Activated naive CD8-positive, alpha-beta T cell treated with anti-CD3 and anti-CD28 coated beads, Interleukin-2, amount 10 ng/mL, durations not matched to agents 7 days and 5 days (primary cell): ENCODE measurements at regions of chr10 and their contacts with region 1.

Region 1: GRCh38 chr10:87861953-87862678 is 1.2 kb downstream of the KLLN start:
- DNase-seq: peak; percentile 95
- ATAC-seq: peak; percentile 65
- H3K4me3 Mint-ChIP-seq: peak overlapping the region; percentile 92
- H3K27ac Mint-ChIP-seq: peak overlapping the region; percentile 95
- H3K4me1 Mint-ChIP-seq: peaks cover 21% of the 10 kb centered on the region
- H3K27me3 Mint-ChIP-seq: no peaks in the 10 kb centered on the region

Region 2: GRCh38 chr10:87875929-87876571 is 13.9 kb after region 1 on chr10:
- POLR2A ChIA-PET with region 1: interaction called, 13 read pairs
- DNase-seq: no peak
- ATAC-seq: no peak
- H3K4me3 Mint-ChIP-seq: no peak overlapping the region
- H3K27ac Mint-ChIP-seq: no peak overlapping the region
- H3K4me1 Mint-ChIP-seq: peaks cover 13% of the 10 kb centered on the region
- H3K27me3 Mint-ChIP-seq: no peaks in the 10 kb centered on the region

Region 3: DNA sequence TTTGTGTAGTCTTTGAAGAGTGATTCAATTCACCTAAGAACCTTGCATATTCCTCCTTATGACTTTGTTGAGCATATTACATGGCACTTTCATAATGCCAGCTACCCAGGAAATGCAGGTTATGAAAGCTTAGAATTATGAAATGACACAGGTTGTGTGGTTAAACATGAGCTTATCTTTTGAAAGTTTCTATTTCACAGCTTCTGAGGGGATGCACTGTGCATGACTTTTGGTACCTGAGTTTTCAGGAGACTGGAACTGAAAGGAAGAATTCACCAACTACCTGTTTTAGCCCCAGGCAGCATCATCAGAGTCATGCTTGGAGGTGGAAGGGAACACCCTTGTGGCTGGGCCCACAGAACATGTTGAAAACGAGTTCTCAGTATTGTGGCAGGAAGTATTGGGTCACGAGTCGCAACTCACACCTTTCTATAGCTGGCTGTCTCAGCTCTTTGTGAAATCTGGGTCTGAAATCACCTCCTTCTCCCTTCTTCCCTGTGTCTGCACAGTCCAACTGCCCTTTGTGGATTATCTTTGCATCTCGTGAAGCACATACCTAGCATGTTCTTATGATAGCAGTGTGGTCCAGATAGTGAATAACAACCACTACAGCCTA is 229.5 kb after region 1 on chr10:
- POLR2A ChIA-PET with region 1: interaction called, 18 read pairs
- DNase-seq: peak; percentile 53
- ATAC-seq: peak; percentile 99
- H3K4me3 Mint-ChIP-seq: peak overlapping the region; percentile 43
- H3K27ac Mint-ChIP-seq: peak overlapping the region; percentile 78
- H3K4me1 Mint-ChIP-seq: peaks cover 30% of the 10 kb centered on the region
- H3K27me3 Mint-ChIP-seq: peaks cover 25% of the 10 kb centered on the region

Region 4: GRCh38 chr10:88270871-88271713 is 409.0 kb after region 1 on chr10:
- POLR2A ChIA-PET with region 1: interaction called, 20 read pairs
- DNase-seq: peak; percentile 43
- ATAC-seq: peak; percentile 82
- H3K4me3 Mint-ChIP-seq: peak overlapping the region; percentile 31
- H3K27ac Mint-ChIP-seq: peak overlapping the region; percentile 69
- H3K4me1 Mint-ChIP-seq: peaks cover 31% of the 10 kb centered on the region
- H3K27me3 Mint-ChIP-seq: peaks cover 21% of the 10 kb centered on the region

Region 5: GRCh38 chr10:88392222-88392621 is 530.1 kb after region 1 on chr10:
- POLR2A ChIA-PET with region 1: interaction called, 97 read pairs
- DNase-seq: no peak
- ATAC-seq: peak; percentile 94
- H3K4me3 Mint-ChIP-seq: peak overlapping the region; percentile 59
- H3K27ac Mint-ChIP-seq: peak overlapping the region; percentile 82
- H3K4me1 Mint-ChIP-seq: peaks cover 17% of the 10 kb centered on the region
- H3K27me3 Mint-ChIP-seq: no peaks in the 10 kb centered on the region